ENCODE measurements at regions of chr3 and their contacts with region 1.

Region 1: GRCh38 chr3:142243134-142243533 is 17.7 kb upstream of the GK5 start:
- DNase-seq: no peak
- H3K4me3 ChIP-seq: no peak overlapping the region
- H3K27ac ChIP-seq: no peak overlapping the region
- H3K4me1 ChIP-seq: no peaks in the 10 kb centered on the region
- H3K27me3 ChIP-seq: peaks cover 6% of the 10 kb centered on the region
- CTCF ChIP-seq: no peak

Region 2: DNA sequence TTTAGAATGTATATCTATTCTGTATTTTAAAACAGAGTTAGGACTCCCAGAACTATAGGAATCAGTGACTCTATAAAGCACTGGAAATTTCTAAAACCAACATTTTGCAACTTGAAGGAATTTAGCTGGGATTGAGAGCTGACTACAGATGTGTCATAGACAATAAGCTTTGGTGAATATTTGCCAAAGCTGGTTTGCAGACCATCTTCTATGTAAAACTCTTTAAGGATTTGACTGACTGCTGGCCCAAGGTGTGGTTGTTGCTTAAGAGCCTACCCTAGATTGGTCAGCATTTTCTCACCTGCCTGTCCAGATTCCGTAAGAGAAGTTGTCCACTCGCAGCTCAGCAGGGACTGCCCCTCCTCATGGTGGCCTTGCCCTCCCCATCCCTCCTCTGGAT is 55.5 kb after region 1 on chr3:
- CTCF ChIA-PET with region 1: no interaction called
- dilution Hi-C with region 1: no loop called
- in situ Hi-C with region 1: no loop called
- intact Hi-C with region 1: loop called (anchors 2 kb)
- DNase-seq: no peak
- H3K4me3 ChIP-seq: no peak overlapping the region
- H3K27ac ChIP-seq: no peak overlapping the region
- H3K4me1 ChIP-seq: no peaks in the 10 kb centered on the region
- H3K27me3 ChIP-seq: no peaks in the 10 kb centered on the region
- CTCF ChIP-seq: no peak

Measured in mammary epithelial cell (primary cell).